ENCODE measurements at regions of chr6 and their contacts with region 1.

Region 1: DNA sequence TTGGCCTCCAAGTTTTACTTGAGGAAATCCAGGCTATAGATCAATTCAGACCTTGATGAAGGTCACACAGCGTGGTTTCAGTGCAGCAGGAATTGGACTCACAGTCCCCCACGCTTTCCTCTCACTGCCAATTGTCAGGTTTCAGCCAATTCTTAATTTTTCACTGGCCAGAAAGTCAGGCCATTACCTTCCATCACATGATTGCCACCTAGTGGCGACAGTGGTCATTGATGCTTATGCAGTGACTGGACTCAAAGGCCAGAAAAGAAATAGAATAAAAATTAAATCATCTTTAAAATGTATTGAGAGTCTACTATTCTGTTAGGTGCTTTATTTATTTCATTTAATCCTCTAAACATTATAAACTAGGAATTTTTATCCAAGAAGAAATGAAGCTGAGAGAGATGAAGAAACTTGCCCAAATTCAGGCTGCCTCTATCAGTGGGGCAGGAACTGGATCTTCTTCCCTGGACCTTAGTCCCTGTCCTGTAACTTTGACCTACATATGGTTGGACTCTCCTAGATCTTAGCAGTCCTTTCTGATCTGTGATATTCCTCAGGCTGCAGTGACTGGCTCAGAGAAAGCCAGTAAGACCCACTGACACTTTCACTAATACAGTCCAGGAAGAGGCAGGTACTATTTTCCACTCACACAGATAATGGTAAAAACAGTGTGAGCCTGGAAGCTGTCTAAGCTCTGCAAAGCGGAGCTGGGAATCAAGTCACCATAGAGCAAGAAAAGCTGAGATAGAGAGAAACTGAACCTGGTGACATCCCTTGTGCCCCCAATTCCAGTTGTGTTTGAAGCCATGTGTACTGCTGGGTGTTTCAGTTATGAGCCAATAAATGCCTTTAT is 133.3 kb downstream of the ELOVL4 start:
- DNase-seq: peak; percentile 70
- H3K4me3 ChIP-seq: no peak overlapping the region
- H3K27ac ChIP-seq: no peak overlapping the region
- H3K4me1 ChIP-seq: peaks cover 29% of the 10 kb centered on the region
- H3K27me3 ChIP-seq: no peaks in the 10 kb centered on the region
- CTCF ChIP-seq: peak; percentile 93

Region 2: DNA sequence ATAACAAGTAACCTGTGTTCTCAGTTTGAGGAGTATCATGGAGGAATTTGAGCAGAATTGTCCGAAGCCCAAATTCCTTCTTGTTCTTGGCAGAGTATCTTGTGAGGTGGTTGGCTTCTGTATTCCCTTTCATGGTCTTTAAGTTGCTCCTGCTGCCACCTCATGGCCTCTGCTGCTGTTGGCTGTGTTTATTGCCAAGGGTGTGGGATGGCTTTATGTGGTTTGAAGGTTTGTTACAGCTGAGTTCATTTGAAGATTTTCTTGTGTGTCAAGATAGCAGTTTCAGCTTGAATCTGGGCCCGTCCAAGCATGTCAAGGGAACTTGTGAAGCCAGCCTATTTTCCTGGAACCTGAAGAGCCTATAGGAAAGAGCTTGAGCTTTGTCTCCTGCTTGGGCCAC is 170.2 kb after region 1 on chr6:
- CTCF ChIA-PET with region 1: interaction called, 13 read pairs
- POLR2A ChIA-PET with region 1: no interaction called
- intact Hi-C with region 1: no loop called
- DNase-seq: peak; percentile 17
- H3K4me3 ChIP-seq: no peak overlapping the region
- H3K27ac ChIP-seq: no peak overlapping the region
- H3K4me1 ChIP-seq: no peaks in the 10 kb centered on the region
- H3K27me3 ChIP-seq: no peaks in the 10 kb centered on the region
- CTCF ChIP-seq: 0 out of 2 replicates have a peak, but pooled peaks have one; percentile 13

Measured in A673 (cell line).